OCI-LY7 (cell line): ENCODE measurements at regions of chr2 and their contacts with region 1.

Region 1: GRCh38 chr2:60998628-60999545 is 18.6 kb upstream of the PEX13 start:
- DNase-seq: peak; percentile 82
- H3K4me3 ChIP-seq: no peak overlapping the region
- H3K27ac ChIP-seq: peak overlapping the region; percentile 38
- H3K4me1 ChIP-seq: peaks cover 53% of the 10 kb centered on the region
- CTCF ChIP-seq: peak; percentile 97

Region 2: DNA sequence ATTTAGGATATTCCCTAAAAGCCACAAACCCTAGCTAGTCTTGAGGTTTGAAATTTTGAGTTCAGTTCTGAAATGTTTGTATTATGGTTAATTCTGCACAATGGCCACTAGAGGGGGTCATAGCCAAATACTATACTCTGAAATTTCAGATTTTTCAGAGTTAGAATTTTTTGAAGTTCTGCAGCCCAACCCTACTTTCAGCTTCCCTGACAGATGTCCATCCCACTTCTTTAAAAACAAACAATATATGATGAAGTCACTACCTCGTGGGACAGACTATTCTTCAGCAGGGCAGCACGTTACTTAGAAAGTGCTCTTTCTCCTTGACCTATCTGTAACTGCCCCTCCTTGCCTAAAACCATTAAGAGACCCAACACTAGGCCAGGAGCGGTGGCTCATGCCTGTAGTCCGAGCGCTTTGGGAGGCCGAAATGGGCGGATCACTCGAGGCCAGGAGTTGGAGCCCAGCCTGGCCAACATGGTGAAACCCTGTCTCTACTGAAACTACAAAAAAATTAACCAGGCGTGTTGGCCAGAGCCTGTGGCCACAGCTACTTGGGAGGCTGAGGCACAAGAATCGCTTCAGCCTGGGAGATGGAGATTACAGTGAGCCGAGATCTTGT is 291.0 kb before region 1 on chr2:
- CTCF ChIA-PET with region 1: no interaction called
- POLR2A ChIA-PET with region 1: no interaction called
- intact Hi-C with region 1: loop called (anchors 1 kb)
- DNase-seq: peak; percentile 68
- H3K4me3 ChIP-seq: no peak overlapping the region
- H3K27ac ChIP-seq: no peak overlapping the region
- H3K4me1 ChIP-seq: no peaks in the 10 kb centered on the region
- CTCF ChIP-seq: peak; percentile 96

Region 3: DNA sequence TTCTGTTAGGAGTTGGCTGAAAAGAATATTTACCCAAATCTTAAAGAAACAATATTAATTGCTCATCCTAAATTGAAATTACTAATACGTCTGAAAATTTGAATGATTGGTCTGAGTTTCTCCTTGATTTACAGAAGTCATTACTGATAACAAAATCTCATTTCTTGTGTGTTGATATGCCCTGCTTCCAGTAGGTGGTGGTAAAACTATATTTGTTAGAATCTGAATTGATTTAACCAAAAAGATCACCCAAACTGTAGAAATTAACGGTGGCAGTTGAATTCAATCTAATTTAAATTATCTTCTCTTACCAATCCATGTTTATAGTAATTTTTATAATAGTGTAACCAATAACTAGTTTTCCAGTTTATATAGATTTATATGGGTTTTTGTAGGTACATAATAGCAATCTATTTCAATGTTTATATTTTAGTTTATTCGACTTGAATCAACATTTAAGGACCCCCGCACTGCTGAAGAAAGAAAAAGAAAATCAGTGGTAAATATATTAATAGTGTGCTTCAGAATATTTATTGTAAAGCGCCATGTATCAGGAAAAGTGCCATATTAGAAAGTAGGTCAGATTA is 204.5 kb before region 1 on chr2:
- CTCF ChIA-PET with region 1: no interaction called
- POLR2A ChIA-PET with region 1: interaction called, 3 read pairs
- intact Hi-C with region 1: loop called (anchors 1 kb)
- DNase-seq: peak; percentile 64
- H3K4me3 ChIP-seq: no peak overlapping the region
- H3K27ac ChIP-seq: no peak overlapping the region
- H3K4me1 ChIP-seq: peaks cover 25% of the 10 kb centered on the region
- CTCF ChIP-seq: peak; percentile 96

Region 4: GRCh38 chr2:60806988-60807681 is 191.8 kb before region 1 on chr2:
- CTCF ChIA-PET with region 1: interaction called, 9 read pairs
- POLR2A ChIA-PET with region 1: interaction called, 13 read pairs
- intact Hi-C with region 1: loop called (anchors 1 kb)
- DNase-seq: peak; percentile 65
- H3K4me3 ChIP-seq: peak overlapping the region; percentile 3
- H3K27ac ChIP-seq: peak overlapping the region; percentile 56
- H3K4me1 ChIP-seq: peaks cover 53% of the 10 kb centered on the region
- CTCF ChIP-seq: no peak

Region 5: DNA sequence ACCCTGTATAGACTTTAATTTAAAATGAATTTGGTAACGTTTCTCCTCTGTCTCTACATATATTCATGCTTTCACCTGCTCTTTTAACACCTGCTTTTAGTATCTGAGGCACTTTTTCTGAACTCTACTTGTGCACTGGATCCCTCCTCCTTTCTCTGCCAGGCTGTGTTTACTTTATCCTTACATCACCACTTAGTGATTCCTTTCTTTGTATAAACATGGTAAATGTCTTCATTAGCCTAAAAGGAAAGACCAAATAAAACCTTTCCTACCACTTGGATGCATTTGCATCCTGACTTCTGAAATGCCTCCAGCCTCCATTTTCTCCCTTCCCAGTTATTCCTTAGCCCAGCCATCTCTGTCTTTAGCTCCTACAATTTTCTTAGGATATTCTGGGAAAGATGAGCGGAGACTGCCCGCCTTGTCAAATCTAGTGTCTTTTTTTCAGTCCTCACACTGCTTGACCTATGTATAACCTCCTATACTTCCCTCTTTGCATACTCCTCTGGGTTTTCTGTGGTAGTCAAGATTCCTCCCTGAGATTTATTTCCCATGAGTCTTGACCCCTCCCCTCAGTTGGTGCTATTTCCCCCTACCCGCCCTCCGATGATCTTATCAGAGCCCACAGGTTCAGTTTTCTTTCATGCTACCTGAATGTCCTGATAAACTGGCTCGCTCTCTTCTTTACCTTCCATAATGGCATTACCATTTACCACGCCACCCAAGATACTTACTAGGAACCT is 72.7 kb before region 1 on chr2:
- CTCF ChIA-PET with region 1: no interaction called
- POLR2A ChIA-PET with region 1: no interaction called
- intact Hi-C with region 1: no loop called
- DNase-seq: no peak
- H3K4me3 ChIP-seq: no peak overlapping the region
- H3K27ac ChIP-seq: no peak overlapping the region
- H3K4me1 ChIP-seq: no peaks in the 10 kb centered on the region
- CTCF ChIP-seq: no peak

Region 6: DNA sequence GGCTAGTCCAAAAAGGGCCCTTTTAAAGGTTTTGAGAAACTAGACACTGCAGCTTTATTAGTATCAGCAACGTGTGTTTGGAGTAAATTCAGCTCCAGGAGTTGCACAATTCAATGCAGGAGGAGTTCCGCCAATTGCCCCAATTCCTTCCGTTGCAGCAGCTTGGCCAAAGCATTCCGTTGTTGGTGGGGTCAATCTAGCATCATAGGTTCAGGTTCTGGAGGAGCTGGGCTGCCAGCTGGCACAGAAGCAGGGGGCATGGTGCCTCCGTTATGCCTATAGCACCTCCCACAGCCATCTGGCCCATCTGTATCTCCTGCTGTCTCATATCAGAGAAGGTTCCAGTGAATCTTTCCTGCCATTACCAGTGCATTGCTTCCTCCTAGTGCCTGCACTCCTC is 62.1 kb before region 1 on chr2:
- CTCF ChIA-PET with region 1: no interaction called
- POLR2A ChIA-PET with region 1: no interaction called
- intact Hi-C with region 1: loop called (anchors 5 kb)
- DNase-seq: no peak
- H3K4me3 ChIP-seq: no peak overlapping the region
- H3K27ac ChIP-seq: no peak overlapping the region
- H3K4me1 ChIP-seq: no peaks in the 10 kb centered on the region
- CTCF ChIP-seq: no peak